PC-9 (cell line): ENCODE measurements at regions of chr2 and their contacts with region 1.

Region 1: GRCh38 chr2:152025678-152026287 is 73.1 kb downstream of the CACNB4 start:
- DNase-seq: peak; percentile 60 to 74
- H3K4me3 ChIP-seq: peak overlapping the region; percentile 42; the same call in 1 of the 2 replicates
- H3K27ac ChIP-seq: no peak overlapping the region
- H3K4me1 ChIP-seq: no peaks in the 10 kb centered on the region
- H3K27me3 ChIP-seq: 0 out of 2 replicates have a peak, but pooled peaks cover under 1% of the 10 kb centered on the region
- CTCF ChIP-seq: peak; percentile 98

Region 2: DNA sequence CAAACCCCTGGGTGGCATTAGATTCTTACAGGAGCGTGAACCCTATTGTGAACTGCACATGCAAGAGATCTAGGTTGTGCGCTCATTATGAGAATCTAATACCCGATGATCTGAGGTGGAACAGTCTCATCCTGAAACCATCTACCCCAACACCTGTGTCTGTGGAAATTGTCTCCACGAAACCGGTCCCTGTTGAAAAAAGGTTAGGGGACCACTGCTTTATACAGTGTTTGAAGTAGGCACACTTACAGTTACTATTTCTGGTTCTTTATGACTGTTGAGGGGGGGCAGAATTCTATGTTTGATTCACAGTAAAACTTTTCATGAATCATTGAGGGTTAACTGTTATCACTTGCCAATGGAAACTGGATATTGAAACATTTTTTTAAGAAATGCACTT is 544.0 kb before region 1 on chr2:
- CTCF ChIA-PET with region 1: no interaction called
- POLR2A ChIA-PET with region 1: no interaction called
- intact Hi-C with region 1: loop called (anchors 10 kb)
- DNase-seq: no peak
- H3K4me3 ChIP-seq: no peak overlapping the region
- H3K27ac ChIP-seq: no peak overlapping the region
- H3K4me1 ChIP-seq: no peaks in the 10 kb centered on the region
- H3K27me3 ChIP-seq: no peaks in the 10 kb centered on the region
- CTCF ChIP-seq: no peak

Region 3: DNA sequence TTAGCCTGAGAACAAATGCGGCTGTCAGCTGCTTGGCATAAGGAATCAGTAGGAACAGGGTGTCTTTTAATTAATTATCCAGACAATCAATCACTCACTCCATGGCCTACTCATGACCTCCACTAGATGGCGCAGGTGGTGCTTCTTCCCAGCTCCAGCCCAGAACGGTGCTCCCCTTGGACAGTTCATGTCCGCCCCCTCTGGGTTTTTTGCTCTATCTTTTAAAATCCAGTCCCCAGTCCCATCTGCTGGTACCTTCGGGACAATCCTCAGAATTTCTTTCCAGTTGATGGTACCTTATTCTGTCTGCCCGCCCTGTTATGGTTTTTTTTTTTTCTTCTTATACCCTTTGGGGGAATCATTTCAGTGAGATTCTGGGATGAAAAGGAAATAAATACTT is 26.7 kb before region 1 on chr2:
- CTCF ChIA-PET with region 1: interaction called, 3 read pairs
- POLR2A ChIA-PET with region 1: no interaction called
- intact Hi-C with region 1: loop called (anchors 2 kb)
- DNase-seq: peak; percentile 39 to 43
- H3K4me3 ChIP-seq: no peak overlapping the region
- H3K27ac ChIP-seq: no peak overlapping the region
- H3K4me1 ChIP-seq: no peaks in the 10 kb centered on the region
- H3K27me3 ChIP-seq: no peaks in the 10 kb centered on the region
- CTCF ChIP-seq: peak; percentile 81